H1 (cell line): ENCODE measurements at regions of chr5 and their contacts with region 1.

Region 1: DNA sequence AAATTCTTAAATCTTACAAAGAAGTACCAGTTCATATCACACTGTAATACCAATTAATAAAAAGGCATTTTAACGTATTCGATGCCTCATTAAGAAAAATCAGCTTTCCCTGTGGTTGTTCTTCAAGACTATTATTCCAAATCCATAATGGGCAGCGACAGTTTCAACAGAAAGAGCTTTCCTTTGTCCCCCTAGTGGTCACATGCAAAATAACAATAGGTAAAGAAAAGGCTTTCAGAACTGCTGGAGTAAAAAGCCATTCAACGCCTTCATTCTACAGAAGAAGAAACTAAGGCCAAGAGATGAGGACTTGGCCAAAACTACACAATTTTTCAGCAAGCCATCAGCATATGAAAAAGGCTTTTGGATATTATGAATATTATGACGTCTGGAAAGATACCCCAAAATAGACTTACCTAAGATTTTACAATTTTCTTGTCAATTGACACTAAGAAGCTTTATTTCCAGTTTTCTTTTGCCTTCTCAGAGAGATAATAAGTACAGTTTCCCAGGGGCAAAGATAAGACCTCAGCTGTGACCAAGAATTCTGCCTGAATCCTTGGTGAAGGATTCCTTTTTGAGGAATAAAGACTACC is 6.7 kb upstream of the CDH6 start:
- DNase-seq: no peak
- H3K4me3 ChIP-seq: no peak overlapping the region
- H3K27ac ChIP-seq: no peak overlapping the region
- H3K4me1 ChIP-seq: no peaks in the 10 kb centered on the region
- H3K27me3 ChIP-seq: no peaks in the 10 kb centered on the region; a peak in 3 of 7 replicates
- CTCF ChIP-seq: peak in 2 of 3 experiments; percentile 45 to 64; a peak in 2 of 4 replicates
- EP300 ChIP-seq: no peak
- POLR2A ChIP-seq: no peak
- RAD21 ChIP-seq: peak; percentile 64 to 65

Region 2: GRCh38 chr5:30698217-30698616 is 488.6 kb before region 1 on chr5:
- CTCF ChIA-PET with region 1: no interaction called
- POLR2A ChIA-PET with region 1: no interaction called
- DNase-seq: no peak
- H3K4me3 ChIP-seq: no peak overlapping the region
- H3K27ac ChIP-seq: no peak overlapping the region
- H3K4me1 ChIP-seq: peaks cover 0 to 2% (median 0%) of the 10 kb centered on the region in 4 experiments; a peak in 1 of 7 replicates
- H3K27me3 ChIP-seq: no peaks in the 10 kb centered on the region
- CTCF ChIP-seq: no peak
- EP300 ChIP-seq: no peak
- POLR2A ChIP-seq: no peak
- RAD21 ChIP-seq: no peak

Region 3: GRCh38 chr5:30874241-30875034 is 312.3 kb before region 1 on chr5:
- CTCF ChIA-PET with region 1: no interaction called
- POLR2A ChIA-PET with region 1: no interaction called
- DNase-seq: no peak
- H3K4me3 ChIP-seq: no peak overlapping the region
- H3K27ac ChIP-seq: no peak overlapping the region
- H3K4me1 ChIP-seq: peaks cover 2 to 4% (median 3%) of the 10 kb centered on the region in 4 experiments; a peak in 3 of 7 replicates
- H3K27me3 ChIP-seq: no peaks in the 10 kb centered on the region
- CTCF ChIP-seq: no peak
- EP300 ChIP-seq: no peak
- POLR2A ChIP-seq: no peak
- RAD21 ChIP-seq: no peak

Region 4: GRCh38 chr5:31059889-31060288 is 126.9 kb before region 1 on chr5:
- CTCF ChIA-PET with region 1: interaction called, 15 read pairs
- POLR2A ChIA-PET with region 1: no interaction called
- DNase-seq: no peak
- H3K4me3 ChIP-seq: no peak overlapping the region
- H3K27ac ChIP-seq: no peak overlapping the region
- H3K4me1 ChIP-seq: no peaks in the 10 kb centered on the region
- H3K27me3 ChIP-seq: no peaks in the 10 kb centered on the region
- CTCF ChIP-seq: no peak
- EP300 ChIP-seq: no peak
- POLR2A ChIP-seq: no peak
- RAD21 ChIP-seq: no peak

Region 5: DNA sequence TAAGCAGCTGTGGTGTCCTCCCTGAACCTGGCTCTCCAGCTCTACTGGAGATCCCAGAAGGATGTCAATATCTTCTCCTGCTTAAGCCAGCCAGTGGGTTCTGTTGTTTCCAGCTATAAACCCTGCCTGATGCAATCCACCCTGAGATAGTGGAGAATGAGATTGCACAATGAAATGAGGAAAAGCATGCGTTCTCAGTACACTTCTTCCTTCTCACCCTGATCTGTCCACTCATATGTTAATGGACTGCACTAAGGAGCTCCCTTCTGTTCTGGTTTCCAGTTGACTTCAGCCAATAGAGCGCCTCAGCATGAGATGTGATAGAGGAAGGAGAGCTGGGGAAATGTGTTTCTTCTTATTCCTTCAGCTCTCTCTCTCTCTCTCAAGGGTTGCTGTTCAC is 33.2 kb before region 1 on chr5:
- CTCF ChIA-PET with region 1: interaction called, 14 read pairs
- POLR2A ChIA-PET with region 1: no interaction called
- DNase-seq: no peak
- H3K4me3 ChIP-seq: no peak overlapping the region
- H3K27ac ChIP-seq: no peak overlapping the region
- H3K4me1 ChIP-seq: peaks cover 0 to 9% (median 5%) of the 10 kb centered on the region in 4 experiments; a peak in 5 of 7 replicates
- H3K27me3 ChIP-seq: no peaks in the 10 kb centered on the region
- CTCF ChIP-seq: no peak
- EP300 ChIP-seq: no peak
- POLR2A ChIP-seq: no peak
- RAD21 ChIP-seq: no peak

Region 6: GRCh38 chr5:31208043-31208442 is 21.3 kb after region 1 on chr5:
- CTCF ChIA-PET with region 1: interaction called, 12 read pairs
- POLR2A ChIA-PET with region 1: no interaction called
- DNase-seq: no peak
- H3K4me3 ChIP-seq: no peak overlapping the region
- H3K27ac ChIP-seq: no peak overlapping the region
- H3K4me1 ChIP-seq: no peaks in the 10 kb centered on the region
- H3K27me3 ChIP-seq: peaks cover 0 to 1% (median 0%) of the 10 kb centered on the region in 4 experiments; a peak in 1 of 7 replicates
- CTCF ChIP-seq: no peak
- EP300 ChIP-seq: no peak
- POLR2A ChIP-seq: no peak
- RAD21 ChIP-seq: no peak

Region 7: GRCh38 chr5:31232273-31232888 is 45.6 kb after region 1 on chr5:
- CTCF ChIA-PET with region 1: interaction called, 18 read pairs
- POLR2A ChIA-PET with region 1: no interaction called
- DNase-seq: peak in 1 of 2 experiments; percentile 2
- H3K4me3 ChIP-seq: no peak overlapping the region
- H3K27ac ChIP-seq: no peak overlapping the region
- H3K4me1 ChIP-seq: peaks cover 0 to 3% (median 0%) of the 10 kb centered on the region in 4 experiments; a peak in 1 of 7 replicates
- H3K27me3 ChIP-seq: no peaks in the 10 kb centered on the region
- CTCF ChIP-seq: peak in 2 of 3 experiments; percentile 75; a peak in 3 of 4 replicates
- EP300 ChIP-seq: no peak
- POLR2A ChIP-seq: no peak
- RAD21 ChIP-seq: peak; percentile 90 to 96

Region 8: GRCh38 chr5:31270396-31270795 is 83.6 kb after region 1 on chr5:
- CTCF ChIA-PET with region 1: interaction called, 13 read pairs
- POLR2A ChIA-PET with region 1: no interaction called
- DNase-seq: no peak
- H3K4me3 ChIP-seq: no peak overlapping the region
- H3K27ac ChIP-seq: no peak overlapping the region
- H3K4me1 ChIP-seq: peaks cover 0 to 13% (median 6%) of the 10 kb centered on the region in 4 experiments; a peak in 3 of 7 replicates
- H3K27me3 ChIP-seq: no peaks in the 10 kb centered on the region
- CTCF ChIP-seq: peak in 2 of 3 experiments; percentile 48 to 67; a peak in 2 of 4 replicates
- EP300 ChIP-seq: no peak
- POLR2A ChIP-seq: no peak
- RAD21 ChIP-seq: peak; percentile 74 to 76

Region 9: GRCh38 chr5:31291323-31291852 is 104.6 kb after region 1 on chr5:
- CTCF ChIA-PET with region 1: no interaction called
- POLR2A ChIA-PET with region 1: no interaction called
- DNase-seq: peak in 1 of 2 experiments; percentile 29
- H3K4me3 ChIP-seq: no peak overlapping the region
- H3K27ac ChIP-seq: no peak overlapping the region
- H3K4me1 ChIP-seq: peaks cover 0 to 5% (median 0%) of the 10 kb centered on the region in 4 experiments; a peak in 1 of 7 replicates
- H3K27me3 ChIP-seq: no peaks in the 10 kb centered on the region
- CTCF ChIP-seq: peak; percentile 40 to 60 (median 56); a peak in 3 of 4 replicates
- EP300 ChIP-seq: no peak
- POLR2A ChIP-seq: no peak
- RAD21 ChIP-seq: peak; percentile 58 to 65

Region 10: GRCh38 chr5:31806561-31806960 is 619.8 kb after region 1 on chr5:
- CTCF ChIA-PET with region 1: no interaction called
- POLR2A ChIA-PET with region 1: no interaction called
- DNase-seq: no peak
- H3K4me3 ChIP-seq: no peak overlapping the region
- H3K27ac ChIP-seq: no peak overlapping the region
- H3K4me1 ChIP-seq: no peaks in the 10 kb centered on the region
- H3K27me3 ChIP-seq: no peaks in the 10 kb centered on the region
- CTCF ChIP-seq: no peak
- EP300 ChIP-seq: no peak
- POLR2A ChIP-seq: no peak
- RAD21 ChIP-seq: no peak